Activated B cell treated with CpG ODN at 0.5 μM for 24 hours (primary cell): ENCODE measurements at regions of chr2 and their contacts with region 1.

Region 1: DNA sequence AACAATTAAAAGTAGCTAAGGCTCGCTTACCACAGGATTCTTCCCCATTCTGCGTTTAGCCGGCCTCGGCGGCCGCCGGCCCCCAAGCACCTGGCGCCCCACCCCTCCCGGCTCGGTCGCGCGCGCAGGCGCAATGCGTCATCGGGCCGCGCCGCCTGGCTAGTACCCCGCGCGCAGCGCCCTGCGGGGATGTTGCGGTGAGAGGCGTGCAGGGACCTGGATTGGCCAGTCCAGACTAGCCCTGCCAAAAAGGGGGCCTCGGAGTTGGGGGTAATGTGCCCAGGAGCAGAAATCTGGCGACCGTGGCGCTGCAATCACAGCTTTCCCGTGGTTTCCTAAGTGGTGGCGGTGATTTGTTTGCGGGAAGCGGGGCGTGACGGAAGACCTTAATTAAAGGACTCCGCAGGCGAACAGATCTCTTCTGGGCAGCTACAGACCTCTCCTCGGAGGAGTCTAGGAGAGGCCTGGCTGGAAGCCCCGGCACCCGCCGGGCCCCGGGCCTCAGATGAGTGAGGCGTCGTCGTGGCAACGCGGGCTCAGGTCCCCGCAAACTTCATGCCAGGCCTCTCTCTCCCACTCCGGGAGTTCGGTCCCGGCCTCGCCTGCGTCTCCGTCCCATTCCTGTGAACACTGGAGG is 606 bp downstream of the TMEM237 start:
- DNase-seq: peak; percentile 91
- ATAC-seq: peak; percentile 86
- H3K4me3 Mint-ChIP-seq: peak overlapping the region; percentile 95
- H3K27ac Mint-ChIP-seq: peak overlapping the region; percentile 91
- H3K4me1 Mint-ChIP-seq: peaks cover 9% of the 10 kb centered on the region
- H3K27me3 Mint-ChIP-seq: no peaks in the 10 kb centered on the region
- CTCF ChIP-seq: no peak

Region 2: GRCh38 chr2:199911052-199911876 is 1731.4 kb before region 1 on chr2 and contains the start of gene C2orf69:
- CTCF ChIA-PET with region 1: no interaction called
- POLR2A ChIA-PET with region 1: no interaction called
- intact Hi-C with region 1: loop called (anchors 1 kb)
- DNase-seq: peak; percentile 86
- ATAC-seq: peak; percentile 83
- H3K4me3 Mint-ChIP-seq: peak within 1 kb of the TSS; percentile 94
- H3K27ac Mint-ChIP-seq: peak within 1 kb of the TSS; percentile 94
- H3K4me1 Mint-ChIP-seq: peaks cover 35% of the 10 kb centered on the region
- H3K27me3 Mint-ChIP-seq: no peaks in the 10 kb centered on the region
- CTCF ChIP-seq: no peak
- total RNA-seq, gene C2orf69: 12.1 and 12.6 TPM in 2 replicates

Region 3: DNA sequence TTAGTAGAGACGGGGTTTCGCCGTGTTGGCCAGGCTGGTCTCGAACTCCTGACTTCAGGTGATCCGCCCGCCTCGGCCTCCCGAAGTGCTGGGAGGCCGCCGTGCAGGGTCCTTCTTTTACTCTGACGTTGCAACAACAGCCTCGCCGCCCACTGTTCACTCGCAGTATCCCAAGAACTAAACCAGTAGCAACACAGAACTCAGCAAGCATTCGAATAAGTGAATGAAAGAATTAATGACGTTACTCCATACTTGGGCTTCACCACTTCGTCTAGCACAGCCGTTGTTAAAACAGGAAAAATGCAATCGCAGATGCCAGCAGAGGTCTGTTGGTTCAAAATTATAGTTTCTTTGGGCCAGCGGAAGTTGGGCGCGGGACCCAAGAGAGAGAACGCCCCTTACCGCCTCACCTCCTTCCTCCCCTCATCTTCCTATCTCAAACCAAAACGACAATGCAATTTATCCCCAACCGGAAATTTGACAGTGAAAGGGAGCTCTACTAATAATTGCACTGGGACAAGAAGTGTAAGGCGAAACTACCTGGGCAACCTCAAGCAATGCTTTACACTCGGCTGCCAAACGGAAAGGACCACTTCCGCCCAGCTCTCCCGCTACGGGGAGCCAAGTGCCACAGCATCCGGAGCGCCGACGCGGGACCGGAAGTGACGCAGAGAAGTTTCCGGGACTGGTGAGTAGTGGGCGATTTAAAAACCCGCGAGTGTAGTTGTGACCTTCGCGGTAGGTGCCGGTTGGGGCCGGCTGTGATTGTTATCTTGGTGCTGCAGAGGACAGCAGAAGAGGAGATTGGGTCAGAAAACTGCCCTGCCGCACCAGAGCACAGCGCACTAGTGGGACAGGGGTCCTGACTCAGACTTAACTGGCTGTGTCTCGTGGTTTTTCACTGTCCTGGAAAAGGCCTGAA is 753.7 kb before region 1 on chr2 and contains the starts of genes NIF3L1 and PPIL3:
- CTCF ChIA-PET with region 1: no interaction called
- POLR2A ChIA-PET with region 1: no interaction called
- intact Hi-C with region 1: loop called (anchors 1 kb)
- DNase-seq: peak; percentile 90
- ATAC-seq: peak; percentile 80
- H3K4me3 Mint-ChIP-seq: peak within 1 kb of the TSS; percentile 99
- H3K27ac Mint-ChIP-seq: peak within 1 kb of the TSS; percentile 100
- H3K4me1 Mint-ChIP-seq: peaks cover 40% of the 10 kb centered on the region
- H3K27me3 Mint-ChIP-seq: no peaks in the 10 kb centered on the region
- CTCF ChIP-seq: no peak
- total RNA-seq, gene NIF3L1: 32.2 and 32.3 TPM in 2 replicates
- total RNA-seq, gene PPIL3: 43.5 and 52.5 TPM in 2 replicates

Region 4: DNA sequence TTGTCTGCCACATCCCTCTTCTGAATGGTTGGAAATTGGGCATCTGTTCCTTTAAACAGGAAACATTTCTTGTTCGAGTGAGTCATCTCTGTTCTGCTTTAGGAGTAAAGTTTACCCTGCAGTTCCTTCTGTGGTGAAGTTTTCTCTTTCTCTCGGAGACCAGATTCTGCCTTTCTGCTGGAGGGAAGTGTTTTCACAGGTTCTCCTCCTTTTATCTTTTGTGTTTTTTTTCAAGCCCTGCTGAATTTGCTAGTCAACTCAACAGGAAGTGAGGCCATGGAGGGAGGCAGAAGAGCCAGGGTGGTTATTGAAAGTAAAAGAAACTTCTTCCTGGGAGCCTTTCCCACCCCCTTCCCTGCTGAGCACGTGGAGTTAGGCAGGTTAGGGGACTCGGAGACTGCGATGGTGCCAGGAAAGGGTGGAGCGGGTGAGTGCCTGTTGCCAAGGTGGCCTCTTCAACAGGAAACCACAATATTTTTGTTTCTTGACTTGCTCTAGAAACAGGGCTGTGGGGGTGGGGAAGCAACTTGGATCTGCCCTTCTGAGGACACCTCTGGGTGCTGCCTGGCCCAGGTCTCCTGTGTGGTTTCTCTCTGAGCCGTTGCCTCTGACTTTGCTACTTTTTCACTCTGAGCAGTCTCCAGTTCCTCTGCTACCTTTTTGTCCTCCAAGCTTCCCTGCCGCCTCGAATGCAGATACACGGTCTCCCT is 384.6 kb before region 1 on chr2:
- CTCF ChIA-PET with region 1: no interaction called
- POLR2A ChIA-PET with region 1: no interaction called
- intact Hi-C with region 1: loop called (anchors 2 kb)
- DNase-seq: peak; percentile 68
- ATAC-seq: peak; percentile 61
- H3K4me3 Mint-ChIP-seq: peak overlapping the region; percentile 90
- H3K27ac Mint-ChIP-seq: peak overlapping the region; percentile 98
- H3K4me1 Mint-ChIP-seq: peaks cover 83% of the 10 kb centered on the region
- H3K27me3 Mint-ChIP-seq: no peaks in the 10 kb centered on the region
- CTCF ChIP-seq: no peak

Region 5: GRCh38 chr2:201608021-201608420 is 34.7 kb before region 1 on chr2:
- CTCF ChIA-PET with region 1: no interaction called
- POLR2A ChIA-PET with region 1: no interaction called
- intact Hi-C with region 1: no loop called
- DNase-seq: no peak
- ATAC-seq: no peak
- H3K4me3 Mint-ChIP-seq: no peak overlapping the region
- H3K27ac Mint-ChIP-seq: no peak overlapping the region
- H3K4me1 Mint-ChIP-seq: no peaks in the 10 kb centered on the region
- H3K27me3 Mint-ChIP-seq: peaks cover 20% of the 10 kb centered on the region
- CTCF ChIP-seq: no peak

Region 6: DNA sequence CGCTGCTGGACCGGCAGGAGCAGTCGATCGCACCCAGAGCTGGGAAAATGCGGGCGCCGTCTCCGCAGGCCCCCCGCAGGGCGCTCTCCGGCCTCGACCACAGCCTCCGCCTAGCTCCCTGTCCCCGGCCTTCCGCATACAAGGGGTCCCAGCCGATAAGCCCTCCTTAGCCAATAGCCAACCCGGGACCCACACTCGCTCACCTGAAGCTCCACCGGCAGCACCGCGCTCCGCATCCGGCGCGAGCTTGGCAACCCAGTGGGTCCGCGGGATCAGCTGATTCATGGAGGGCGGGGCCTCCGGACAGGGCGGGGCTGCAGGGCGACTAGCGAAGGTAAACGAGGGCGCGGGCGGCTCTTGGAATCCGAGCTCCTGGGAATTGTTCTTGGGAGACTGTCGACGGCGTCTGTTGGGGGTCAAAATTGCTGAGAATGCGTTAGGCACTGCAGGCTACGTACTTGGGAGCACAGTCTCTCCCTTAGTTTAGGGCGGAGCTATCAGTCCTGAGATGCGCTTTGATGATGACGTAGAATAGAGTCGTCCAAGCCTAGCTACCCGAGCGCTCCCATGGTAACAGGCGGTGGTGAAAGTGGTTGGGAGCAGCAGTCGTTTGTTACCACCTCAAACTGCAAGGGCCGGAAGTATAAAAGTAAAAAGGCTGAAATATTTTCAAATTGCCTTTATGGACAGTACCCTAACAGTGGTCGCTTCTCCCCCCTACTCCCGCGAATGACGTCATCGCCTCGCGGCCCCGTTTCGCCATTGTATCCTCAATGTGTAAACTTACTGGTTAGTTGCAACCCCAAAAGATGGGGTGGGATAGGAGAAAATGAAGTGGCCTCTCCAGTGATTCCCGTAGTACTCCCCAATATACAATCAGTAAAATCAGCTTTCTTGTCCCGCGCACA is 138.2 kb after region 1 on chr2 and contains the start of gene ALS2:
- CTCF ChIA-PET with region 1: no interaction called
- POLR2A ChIA-PET with region 1: interaction called, 6 read pairs
- intact Hi-C with region 1: loop called (anchors 1 kb)
- DNase-seq: peak; percentile 95
- ATAC-seq: peak; percentile 90
- H3K4me3 Mint-ChIP-seq: peak within 1 kb of the TSS; percentile 96
- H3K27ac Mint-ChIP-seq: peak within 1 kb of the TSS; percentile 95
- H3K4me1 Mint-ChIP-seq: peaks cover 17% of the 10 kb centered on the region
- H3K27me3 Mint-ChIP-seq: peaks cover 8% of the 10 kb centered on the region
- CTCF ChIP-seq: no peak
- total RNA-seq, gene ALS2: 11.6 and 14.2 TPM in 2 replicates